ENCODE measurements at regions of chr5 and their contacts with region 1.

Region 1: DNA sequence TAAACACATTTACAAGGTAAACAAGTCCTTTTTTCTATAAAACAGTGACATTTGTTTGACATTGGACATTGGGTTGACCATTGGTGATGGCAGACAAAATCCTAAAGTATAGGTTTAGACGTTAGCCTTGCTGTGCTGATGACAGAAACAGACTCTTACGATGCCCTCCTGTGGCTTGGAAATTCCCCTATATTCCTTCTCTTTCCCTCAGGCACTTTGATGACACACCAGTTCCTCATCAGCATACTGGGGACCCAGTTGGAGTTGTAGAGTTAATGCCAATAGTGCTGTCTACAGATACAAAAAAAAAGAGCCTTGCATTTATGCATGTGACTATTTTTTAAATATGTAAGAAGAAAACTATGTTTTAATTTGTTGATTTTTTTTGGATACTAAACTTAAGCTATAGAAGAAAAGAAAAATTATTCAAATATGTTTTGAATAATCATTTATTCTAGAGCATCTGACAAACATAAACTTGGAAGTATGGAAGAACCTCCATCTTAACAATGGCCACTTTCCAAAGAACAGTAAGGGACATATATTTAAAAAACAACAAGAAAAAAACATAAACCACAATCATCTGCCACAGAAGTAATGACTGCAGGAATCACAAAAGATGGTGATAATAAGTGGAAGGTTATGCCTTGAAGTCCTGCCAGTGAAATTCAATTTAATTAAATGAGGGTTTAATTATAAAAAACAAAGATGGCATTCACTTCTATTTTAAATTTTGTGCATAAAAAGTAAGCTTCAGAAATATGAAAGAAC is 75.6 kb upstream of the SNCAIP start:
- DNase-seq: no peak
- H3K4me3 Mint-ChIP-seq: no peak overlapping the region
- H3K27ac Mint-ChIP-seq: no peak overlapping the region
- H3K4me1 Mint-ChIP-seq: no peaks in the 10 kb centered on the region
- H3K27me3 Mint-ChIP-seq: no peaks in the 10 kb centered on the region

Region 2: GRCh38 chr5:120240706-120241105 is 1995.7 kb before region 1 on chr5:
- intact Hi-C with region 1: loop called (anchors 10 kb)
- DNase-seq: no peak
- H3K4me3 Mint-ChIP-seq: no peak overlapping the region
- H3K27ac Mint-ChIP-seq: no peak overlapping the region
- H3K4me1 Mint-ChIP-seq: no peaks in the 10 kb centered on the region
- H3K27me3 Mint-ChIP-seq: no peaks in the 10 kb centered on the region

Region 3: GRCh38 chr5:121031491-121031890 is 1205.0 kb before region 1 on chr5:
- intact Hi-C with region 1: no loop called
- DNase-seq: no peak
- H3K4me3 Mint-ChIP-seq: no peak overlapping the region
- H3K27ac Mint-ChIP-seq: no peak overlapping the region
- H3K4me1 Mint-ChIP-seq: no peaks in the 10 kb centered on the region
- H3K27me3 Mint-ChIP-seq: no peaks in the 10 kb centered on the region

Region 4: GRCh38 chr5:122291000-122291901 is 54.8 kb after region 1 on chr5:
- intact Hi-C with region 1: no loop called
- DNase-seq: no peak
- H3K4me3 Mint-ChIP-seq: no peak overlapping the region
- H3K27ac Mint-ChIP-seq: no peak overlapping the region
- H3K4me1 Mint-ChIP-seq: no peaks in the 10 kb centered on the region
- H3K27me3 Mint-ChIP-seq: no peaks in the 10 kb centered on the region

Region 5: GRCh38 chr5:122350496-122350895 is 114.0 kb after region 1 on chr5:
- intact Hi-C with region 1: no loop called
- DNase-seq: no peak
- H3K4me3 Mint-ChIP-seq: no peak overlapping the region
- H3K27ac Mint-ChIP-seq: no peak overlapping the region
- H3K4me1 Mint-ChIP-seq: no peaks in the 10 kb centered on the region
- H3K27me3 Mint-ChIP-seq: no peaks in the 10 kb centered on the region